ENCODE measurements at regions of chrX and their contacts with region 1.

Region 1: GRCh38 chrX:155026726-155027508 is at the start of gene FUNDC2:
- DNase-seq: peak; percentile 86 to 96
- ATAC-seq: peak; percentile 84 to 93 (median 85)
- H3K4me3 ChIP-seq: peak within 1 kb of the TSS; percentile 92
- H3K4me3 Mint-ChIP-seq: peak within 1 kb of the TSS; percentile 91
- H3K27ac ChIP-seq: peak within 1 kb of the TSS; percentile 100
- H3K27ac Mint-ChIP-seq: peak within 1 kb of the TSS; percentile 87 to 95
- H3K4me1 ChIP-seq: no peaks in the 10 kb centered on the region
- H3K4me1 Mint-ChIP-seq: peaks cover 5 to 6% of the 10 kb centered on the region in 2 donors
- H3K27me3 ChIP-seq: no peaks in the 10 kb centered on the region
- H3K27me3 Mint-ChIP-seq: peaks cover 0 to 7% of the 10 kb centered on the region in 2 donors
- CTCF ChIP-seq: no peak
- total RNA-seq, gene FUNDC2: 49.7 to 52.9 (median 52.1) TPM

Region 2: GRCh38 chrX:155056877-155057792 is 30.2 kb after region 1 on chrX:
- intact Hi-C with region 1: loop called (anchors 1 kb)
- DNase-seq: peak; percentile 44 to 79
- ATAC-seq: peak; percentile 81 to 95 (median 90)
- H3K4me3 ChIP-seq: peak overlapping the region; percentile 18
- H3K4me3 Mint-ChIP-seq: peak overlapping the region; percentile 64
- H3K27ac ChIP-seq: peak overlapping the region; percentile 26
- H3K27ac Mint-ChIP-seq: peak overlapping the region in 1 of 2 donors; percentile 58
- H3K4me1 ChIP-seq: peaks cover 15% of the 10 kb centered on the region
- H3K4me1 Mint-ChIP-seq: peaks cover 7 to 20% of the 10 kb centered on the region in 2 donors
- H3K27me3 ChIP-seq: no peaks in the 10 kb centered on the region
- H3K27me3 Mint-ChIP-seq: no peaks in the 10 kb centered on the region
- CTCF ChIP-seq: peak; percentile 66

Region 3: DNA sequence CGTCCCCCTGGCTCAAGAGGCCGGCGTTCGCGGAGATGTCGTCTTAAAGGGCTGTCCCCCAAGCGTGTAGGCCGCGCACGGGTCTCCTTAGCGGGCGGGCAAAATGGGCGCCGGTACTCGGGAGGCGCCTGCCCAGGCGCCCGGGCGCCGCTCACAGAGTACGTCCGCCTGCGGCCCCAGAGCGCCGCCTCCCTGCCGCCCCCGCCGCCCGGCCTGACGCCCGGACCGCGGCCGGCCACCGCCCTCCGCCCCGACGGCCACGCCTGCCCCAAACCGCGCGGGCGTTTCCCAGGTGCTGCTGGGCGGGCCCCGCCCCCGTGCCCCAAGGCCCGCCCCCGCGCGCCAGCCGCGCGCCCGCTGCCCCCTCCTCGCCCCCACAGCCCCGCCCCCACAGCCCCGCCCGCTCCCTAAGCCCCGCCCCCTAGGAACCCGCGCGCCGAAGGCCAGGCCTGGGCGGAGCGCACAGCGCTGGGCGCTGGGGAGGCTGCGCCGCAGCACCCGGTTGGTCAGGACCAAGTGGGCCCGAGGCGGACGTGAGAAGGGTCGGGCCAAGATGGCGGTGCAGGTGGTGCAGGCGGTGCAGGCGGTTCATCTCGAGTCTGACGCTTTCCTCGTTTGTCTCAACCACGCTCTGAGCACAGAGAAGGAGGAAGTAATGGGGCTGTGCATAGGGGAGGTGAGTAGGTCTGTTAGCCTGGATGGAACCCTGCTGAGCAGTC is 44.2 kb after region 1 on chrX and contains the starts of genes BRCC3, CMC4 and MTCP1:
- intact Hi-C with region 1: loop called (anchors 2 kb)
- DNase-seq: peak; percentile 72 to 84
- ATAC-seq: peak; percentile 81 to 92 (median 81)
- H3K4me3 ChIP-seq: peak within 1 kb of the TSS; percentile 93
- H3K4me3 Mint-ChIP-seq: peak within 1 kb of the TSS; percentile 85
- H3K27ac ChIP-seq: peak within 1 kb of the TSS; percentile 98
- H3K27ac Mint-ChIP-seq: peak within 1 kb of the TSS; percentile 83 to 89
- H3K4me1 ChIP-seq: peaks cover 21% of the 10 kb centered on the region
- H3K4me1 Mint-ChIP-seq: peaks cover 12 to 37% of the 10 kb centered on the region in 2 donors
- H3K27me3 ChIP-seq: no peaks in the 10 kb centered on the region
- H3K27me3 Mint-ChIP-seq: no peaks in the 10 kb centered on the region
- CTCF ChIP-seq: no peak
- total RNA-seq, gene BRCC3: 15.0 to 20.8 (median 17.9) TPM
- total RNA-seq, gene CMC4: 2.7 to 9.2 (median 5.2) TPM
- total RNA-seq, gene MTCP1: 12.1 to 17.3 (median 14.0) TPM

Measured in natural killer cell (primary cell).